Sigmoid colon (tissue), 7 donors: ENCODE measurements at regions of chr17 and their contacts with region 1.

Region 1: GRCh38 chr17:42322382-42323267 is 34.3 kb downstream of the STAT5A start:
- DNase-seq: peak; percentile 97
- H3K4me3 ChIP-seq: no peak overlapping the region
- H3K27ac ChIP-seq: peak overlapping the region in 3 of 4 donors; percentile 63 to 81 (median 74)
- H3K4me1 ChIP-seq: peaks cover 0 to 23% (median 18%) of the 10 kb centered on the region in 4 donors
- H3K27me3 ChIP-seq: no peaks in the 10 kb centered on the region
- CTCF ChIP-seq: peak; percentile 99 to 100 (median 100)
- EP300 ChIP-seq: no peak
- POLR2A ChIP-seq: no peak

Region 2: GRCh38 chr17:42405963-42406495 is 83.4 kb after region 1 on chr17:
- intact Hi-C with region 1: loop called (anchors 1 kb)
- DNase-seq: peak; percentile 94
- H3K4me3 ChIP-seq: no peak overlapping the region
- H3K27ac ChIP-seq: peak overlapping the region; percentile 84 to 100 (median 95)
- H3K4me1 ChIP-seq: peaks cover 0 to 90% (median 85%) of the 10 kb centered on the region in 4 donors
- H3K27me3 ChIP-seq: no peaks in the 10 kb centered on the region
- CTCF ChIP-seq: peak; percentile 80 to 89 (median 82)
- EP300 ChIP-seq: no peak
- POLR2A ChIP-seq: no peak

Region 3: DNA sequence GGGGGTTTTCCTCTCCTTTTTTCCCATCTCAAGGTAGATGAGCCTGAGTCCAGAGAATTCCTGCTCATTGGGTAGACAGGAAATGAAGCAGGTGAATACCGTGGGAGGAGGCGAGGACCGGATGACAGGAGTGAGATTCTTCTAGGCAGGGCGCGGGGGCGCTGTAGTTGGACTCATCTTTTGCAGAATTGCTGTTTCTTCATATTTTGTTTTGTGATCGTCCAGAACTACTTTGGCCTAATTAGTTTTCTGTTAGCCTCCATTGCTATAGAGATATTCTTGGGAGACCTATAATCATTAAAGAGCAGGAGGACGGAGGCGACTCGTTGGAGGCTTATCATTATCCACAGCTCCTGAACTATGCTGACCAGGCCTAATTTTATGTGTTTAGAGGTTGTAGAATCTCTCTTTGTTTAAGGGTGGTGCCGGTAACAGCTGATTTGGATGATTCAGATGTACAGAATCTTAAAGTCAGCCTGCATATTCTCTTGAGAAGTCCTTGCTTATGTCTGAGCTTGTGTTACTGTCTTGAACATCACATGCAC is 136.7 kb after region 1 on chr17:
- intact Hi-C with region 1: loop called (anchors 5 kb)
- DNase-seq: peak; percentile 78
- H3K4me3 ChIP-seq: peak overlapping the region; percentile 72 to 86 (median 78)
- H3K27ac ChIP-seq: peak overlapping the region; percentile 95 to 99 (median 96)
- H3K4me1 ChIP-seq: peaks cover 0 to 30% (median 15%) of the 10 kb centered on the region in 4 donors
- H3K27me3 ChIP-seq: no peaks in the 10 kb centered on the region
- CTCF ChIP-seq: peak in 1 of 4 experiments; percentile 8
- EP300 ChIP-seq: no peak
- POLR2A ChIP-seq: no peak

Region 4: DNA sequence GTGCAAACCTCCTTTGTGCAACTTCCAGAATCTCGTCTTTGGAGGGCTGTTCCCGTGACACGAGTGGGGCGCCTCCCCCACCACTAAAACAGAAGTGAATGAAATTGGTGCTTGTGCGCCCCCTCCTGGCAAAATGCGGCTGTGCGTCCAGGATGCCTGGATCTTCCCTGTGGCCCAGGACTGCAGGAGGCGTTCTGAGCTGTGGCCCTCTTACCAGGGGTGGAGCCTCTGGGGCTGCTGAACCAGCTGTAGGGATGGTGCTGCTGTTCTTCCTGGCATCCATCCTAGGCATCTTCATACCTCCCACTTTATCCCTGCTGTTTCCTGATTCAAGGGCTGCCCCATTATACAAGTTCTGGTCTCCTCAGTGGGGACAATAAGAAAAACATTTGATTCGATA is 194.9 kb after region 1 on chr17:
- intact Hi-C with region 1: loop called (anchors 5 kb)
- DNase-seq: peak; percentile 95
- H3K4me3 ChIP-seq: no peak overlapping the region
- H3K27ac ChIP-seq: peak overlapping the region; percentile 95 to 98 (median 98)
- H3K4me1 ChIP-seq: peaks cover 0 to 69% (median 64%) of the 10 kb centered on the region in 4 donors
- H3K27me3 ChIP-seq: no peaks in the 10 kb centered on the region
- CTCF ChIP-seq: peak; percentile 87 to 96 (median 94)
- EP300 ChIP-seq: no peak
- POLR2A ChIP-seq: no peak